ENCODE measurements at regions of chr9 and their contacts with region 1.

Region 1: DNA sequence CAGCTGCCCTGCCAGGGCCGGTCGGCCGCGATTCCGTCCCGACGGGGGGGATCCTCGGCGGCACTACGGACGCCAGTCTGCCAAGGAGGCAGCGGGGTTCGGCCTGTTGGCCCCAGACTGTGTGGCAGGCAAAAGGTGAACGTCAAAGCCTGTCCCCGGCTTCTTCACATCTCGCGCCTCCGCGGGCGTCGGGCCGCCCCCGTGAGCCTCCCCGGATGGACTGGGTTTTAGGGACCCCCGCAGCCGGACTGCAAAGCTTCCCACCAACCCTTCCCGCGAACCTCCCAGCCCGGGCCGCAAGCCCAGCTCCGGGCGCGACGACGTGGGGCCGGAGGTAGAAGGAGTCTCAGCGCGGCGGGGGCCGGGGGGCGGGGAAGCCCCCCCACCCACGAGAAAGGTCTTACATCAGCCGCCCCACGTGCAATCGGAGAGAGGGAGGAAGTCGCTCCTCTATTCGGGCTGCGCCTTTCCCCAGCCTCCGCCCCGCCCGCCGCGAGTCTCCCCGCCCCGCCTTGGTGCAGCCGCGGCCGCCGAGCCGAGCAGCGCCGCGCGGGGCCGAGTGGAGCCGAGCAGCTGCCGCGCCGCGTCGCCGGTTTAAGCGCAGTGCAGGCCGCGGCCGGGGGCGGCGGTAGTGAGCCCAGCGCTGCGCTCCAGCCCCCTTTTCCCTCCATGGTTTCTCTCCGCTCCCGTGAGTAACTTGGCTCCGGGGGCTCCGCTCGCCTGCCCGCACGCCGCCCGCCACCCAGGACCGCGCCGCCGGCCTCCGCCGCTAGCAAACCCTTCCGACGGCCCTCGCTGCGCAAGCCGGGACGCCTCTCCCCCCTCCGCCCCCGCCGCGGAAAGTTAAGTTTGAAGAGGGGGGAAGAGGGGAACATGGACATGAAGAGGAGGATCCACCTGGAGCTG is at the start of gene ANP32B:
- DNase-seq: peak; percentile 89
- ATAC-seq: peak; percentile 93
- H3K4me3 ChIP-seq: peak within 1 kb of the TSS; percentile 84
- H3K27ac ChIP-seq: peak within 1 kb of the TSS; percentile 93
- H3K4me1 ChIP-seq: peaks cover 5% of the 10 kb centered on the region
- H3K27me3 ChIP-seq: no peaks in the 10 kb centered on the region
- CTCF ChIP-seq: peak; percentile 96
- POLR2A ChIP-seq: peak; percentile 60; the same call in 1 of the 2 replicates
- RAD21 ChIP-seq: peak; percentile 52
- total RNA-seq, gene ANP32B: 3.9 and 9.4 TPM in 2 replicates

Region 2: DNA sequence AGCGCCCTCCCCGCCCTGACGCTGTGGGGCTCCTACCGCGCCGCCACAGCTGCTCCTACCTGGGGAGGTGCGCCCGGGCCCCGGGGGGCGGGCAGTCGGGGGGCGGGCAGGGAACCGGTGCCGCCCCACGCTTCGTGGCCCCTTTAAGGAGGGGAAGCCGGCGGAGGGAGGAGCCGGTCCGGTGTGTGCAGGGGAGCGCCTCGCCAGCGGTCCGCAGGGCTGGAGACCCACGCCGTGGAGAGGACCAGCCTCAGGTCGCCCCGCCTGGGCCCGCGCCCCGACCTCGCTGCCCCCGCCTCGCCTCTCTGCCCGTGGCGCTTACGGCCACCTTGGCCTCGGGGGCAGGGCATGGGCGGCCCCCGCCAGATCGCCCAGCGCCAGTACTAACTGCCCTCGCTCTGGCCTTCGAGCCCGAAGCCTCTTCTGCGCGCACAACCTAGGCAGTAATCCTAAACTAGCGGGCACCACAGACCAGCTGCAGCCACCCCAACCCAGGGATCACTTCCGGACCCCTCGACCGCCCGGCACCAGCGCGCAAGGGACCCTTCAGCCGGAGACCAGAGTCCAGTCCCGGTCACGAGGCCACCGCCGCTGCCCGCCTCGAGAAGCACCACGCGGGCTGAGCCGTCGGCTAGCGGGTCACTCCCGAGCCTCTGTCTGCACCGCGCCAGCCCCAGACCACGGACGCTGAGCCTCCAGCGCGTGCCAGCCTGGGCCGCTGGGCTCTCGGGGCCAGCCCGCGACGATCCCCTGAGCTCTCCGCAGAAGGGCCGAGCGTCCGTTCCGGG is 129.7 kb before region 1 on chr9 and contains the start of gene FOXE1:
- CTCF ChIA-PET with region 1: no interaction called
- POLR2A ChIA-PET with region 1: no interaction called
- dilution Hi-C with region 1: no loop called
- in situ Hi-C with region 1: no loop called
- intact Hi-C with region 1: no loop called
- DNase-seq: no peak
- ATAC-seq: peak; percentile 38; the same call in 1 of the 2 replicates
- H3K4me3 ChIP-seq: peak within 1 kb of the TSS; percentile 41
- H3K27ac ChIP-seq: no peak within 1 kb of the TSS
- H3K4me1 ChIP-seq: peaks cover 6% of the 10 kb centered on the region; the same call in 1 of the 2 replicates
- H3K27me3 ChIP-seq: peaks cover 95% of the 10 kb centered on the region
- CTCF ChIP-seq: no peak
- POLR2A ChIP-seq: no peak
- RAD21 ChIP-seq: no peak
- total RNA-seq, gene FOXE1: under 0.01 and 0.28 TPM in 2 replicates

Region 3: DNA sequence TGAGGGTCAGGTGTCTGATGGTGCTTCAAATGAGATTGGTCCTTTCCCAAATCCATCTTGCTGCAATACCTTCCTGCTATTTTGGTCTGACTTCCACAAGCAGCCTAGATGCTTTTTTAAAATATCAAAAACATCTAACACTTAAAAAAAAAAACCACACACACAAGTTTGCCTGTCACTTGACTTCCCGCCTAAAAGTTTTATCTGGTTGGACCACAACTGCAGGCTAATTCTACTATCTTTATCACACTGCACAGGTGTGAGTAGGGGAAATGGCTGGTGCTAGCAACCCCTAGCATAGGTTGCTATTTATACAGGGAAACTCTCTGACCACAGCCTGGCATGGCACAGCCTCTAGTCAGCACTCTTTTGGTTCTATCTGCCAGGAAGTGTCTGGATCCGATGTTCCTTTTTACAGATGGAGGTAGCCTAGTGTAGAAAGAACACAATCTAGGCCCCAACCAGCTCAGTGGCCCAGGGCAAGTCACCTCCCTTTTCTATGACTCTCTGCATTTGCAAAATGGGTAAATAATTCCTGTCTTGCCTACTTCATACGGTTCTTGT is 44.8 kb before region 1 on chr9 and contains the start of gene HEMGN:
- CTCF ChIA-PET with region 1: no interaction called
- POLR2A ChIA-PET with region 1: no interaction called
- dilution Hi-C with region 1: no loop called
- in situ Hi-C with region 1: no loop called
- intact Hi-C with region 1: no loop called
- DNase-seq: no peak
- ATAC-seq: no peak
- H3K4me3 ChIP-seq: no peak within 1 kb of the TSS
- H3K27ac ChIP-seq: no peak within 1 kb of the TSS
- H3K4me1 ChIP-seq: no peaks in the 10 kb centered on the region
- H3K27me3 ChIP-seq: peaks cover 64% of the 10 kb centered on the region
- CTCF ChIP-seq: no peak
- POLR2A ChIP-seq: no peak
- RAD21 ChIP-seq: no peak
- total RNA-seq, gene HEMGN: not detected in 2 replicates

Region 4: GRCh38 chr9:97958812-97959511 is 24.0 kb before region 1 on chr9:
- CTCF ChIA-PET with region 1: interaction called, 4 read pairs
- POLR2A ChIA-PET with region 1: no interaction called
- dilution Hi-C with region 1: no loop called
- in situ Hi-C with region 1: no loop called
- intact Hi-C with region 1: loop called (anchors 2 kb)
- DNase-seq: peak; percentile 93
- ATAC-seq: peak; percentile 99
- H3K4me3 ChIP-seq: no peak overlapping the region
- H3K27ac ChIP-seq: peak overlapping the region; percentile 23; the same call in 1 of the 2 replicates
- H3K4me1 ChIP-seq: peaks cover 6% of the 10 kb centered on the region
- H3K27me3 ChIP-seq: peaks cover 10% of the 10 kb centered on the region
- CTCF ChIP-seq: no peak
- POLR2A ChIP-seq: no peak
- RAD21 ChIP-seq: no peak

Region 5: GRCh38 chr9:98034593-98035546 is 51.9 kb after region 1 on chr9:
- CTCF ChIA-PET with region 1: interaction called, 4 read pairs
- POLR2A ChIA-PET with region 1: no interaction called
- dilution Hi-C with region 1: no loop called
- in situ Hi-C with region 1: no loop called
- intact Hi-C with region 1: loop called (anchors 2 kb)
- DNase-seq: peak; percentile 75
- ATAC-seq: no peak
- H3K4me3 ChIP-seq: no peak overlapping the region
- H3K27ac ChIP-seq: peak overlapping the region; percentile 80
- H3K4me1 ChIP-seq: peaks cover 14% of the 10 kb centered on the region
- H3K27me3 ChIP-seq: no peaks in the 10 kb centered on the region
- CTCF ChIP-seq: peak; percentile 59
- POLR2A ChIP-seq: no peak
- RAD21 ChIP-seq: peak; percentile 34

Region 6: GRCh38 chr9:98056269-98057137 is 73.6 kb after region 1 on chr9 and contains the start of gene NANS:
- CTCF ChIA-PET with region 1: interaction called, 3 read pairs
- POLR2A ChIA-PET with region 1: no interaction called
- dilution Hi-C with region 1: no loop called
- in situ Hi-C with region 1: no loop called
- intact Hi-C with region 1: loop called (anchors 2 kb)
- DNase-seq: peak; percentile 97
- ATAC-seq: peak; percentile 97
- H3K4me3 ChIP-seq: peak within 1 kb of the TSS; percentile 88
- H3K27ac ChIP-seq: peak within 1 kb of the TSS; percentile 84
- H3K4me1 ChIP-seq: peaks cover 3% of the 10 kb centered on the region
- H3K27me3 ChIP-seq: no peaks in the 10 kb centered on the region
- CTCF ChIP-seq: peak; percentile 33
- POLR2A ChIP-seq: peak; percentile 99
- RAD21 ChIP-seq: peak; percentile 33; the same call in 1 of the 2 replicates
- total RNA-seq, gene NANS: 306 and 313 TPM in 2 replicates